ENCODE measurements at regions of chr12 and their contacts with region 1.

Region 1: DNA sequence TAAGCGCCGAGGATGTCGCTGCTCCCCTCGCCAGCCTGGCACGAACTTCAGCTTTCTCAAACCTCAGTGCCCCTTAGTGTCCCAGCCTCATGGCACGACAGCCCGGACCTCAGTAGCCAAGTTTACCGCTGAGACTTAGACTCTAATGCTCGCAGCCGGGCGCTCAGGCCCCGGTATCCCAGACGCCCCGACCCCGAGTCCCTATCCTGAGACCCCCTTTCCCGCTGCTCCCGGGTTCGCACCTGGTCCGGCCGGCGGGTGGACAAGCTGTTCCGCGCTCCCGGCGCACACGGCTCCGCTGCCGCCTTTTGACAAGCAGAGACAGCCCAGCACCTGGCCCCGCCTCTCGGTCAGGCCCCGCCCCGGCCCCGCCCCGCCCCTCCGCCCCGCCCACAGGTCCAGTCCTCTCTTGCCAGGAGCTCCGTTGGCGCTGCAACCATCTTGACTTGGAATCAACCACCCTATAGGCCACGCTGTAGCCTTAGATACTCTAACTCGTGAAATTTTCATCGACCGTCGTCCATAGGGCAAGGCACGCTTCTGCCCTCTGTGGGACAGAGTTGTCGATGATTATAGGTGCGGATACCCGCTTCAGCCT is at the start of gene VDR:
- DNase-seq: peak; percentile 53 to 86 (median 67)
- ATAC-seq: peak; percentile 62 to 87 (median 80)
- H3K4me3 ChIP-seq: peak within 1 kb of the TSS; percentile 29 to 74 (median 54)
- H3K27ac ChIP-seq: peak within 1 kb of the TSS in 2 of 12 donors; percentile 32 to 79
- H3K4me1 ChIP-seq: peaks cover 0 to 58% (median 14%) of the 10 kb centered on the region in 12 donors
- H3K27me3 ChIP-seq: peaks cover 0 to 29% (median 2%) of the 10 kb centered on the region in 9 donors
- CTCF ChIP-seq: peak in 2 of 12 donors; percentile 11 to 37
- POLR2A ChIP-seq: peak in 1 of 2 donors; percentile 33
- total RNA-seq, gene VDR: 0.15 to 4.3 (median 0.63) TPM

Region 2: GRCh38 chr12:47949441-47950308 is 44.9 kb after region 1 on chr12:
- intact Hi-C with region 1: loop called in 8 of 10 experiments (anchors 2 to 5 kb)
- DNase-seq: peak; percentile 68 to 88 (median 80)
- ATAC-seq: peak; percentile 70 to 92 (median 89)
- H3K4me3 ChIP-seq: no peak overlapping the region
- H3K27ac ChIP-seq: no peak overlapping the region
- H3K4me1 ChIP-seq: peaks cover 0 to 17% (median 2%) of the 10 kb centered on the region in 12 donors
- H3K27me3 ChIP-seq: no peaks in the 10 kb centered on the region
- CTCF ChIP-seq: peak; percentile 76 to 91 (median 82)
- POLR2A ChIP-seq: no peak

Region 3: DNA sequence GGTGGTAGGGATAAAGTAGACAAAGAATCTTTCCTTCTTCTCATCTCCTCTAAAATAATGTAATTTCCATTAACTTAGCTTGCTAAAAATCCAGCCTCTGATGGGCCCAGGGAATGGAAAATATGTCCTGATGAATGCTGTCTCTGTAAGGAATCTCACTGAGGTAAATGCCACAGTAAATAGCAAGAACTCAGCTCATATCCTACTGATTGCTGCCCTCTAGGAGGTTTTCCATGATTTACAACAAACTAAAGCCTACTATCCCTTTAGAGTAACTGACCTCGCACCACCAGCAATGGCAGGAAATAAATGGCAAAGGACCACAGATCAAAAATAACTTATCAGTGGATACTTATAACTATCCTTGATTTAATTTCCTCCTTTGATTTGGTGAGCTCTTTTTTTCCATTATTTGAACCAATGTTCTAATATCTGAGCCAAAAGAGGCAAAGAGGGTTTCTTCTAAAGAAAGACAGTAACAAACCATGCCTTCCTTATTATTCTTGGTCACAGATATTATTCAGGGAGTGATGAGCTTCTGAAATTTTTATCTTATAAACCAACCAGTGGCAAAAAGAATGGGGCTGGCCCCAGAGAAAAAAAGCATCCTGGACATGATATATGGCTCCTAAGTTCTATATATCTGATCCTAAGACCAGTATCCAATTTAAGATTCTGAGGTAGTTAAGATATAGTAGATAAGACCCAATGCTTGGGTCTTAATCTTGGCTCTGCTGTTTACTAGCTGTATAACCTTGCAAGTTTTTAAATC is 157.3 kb after region 1 on chr12:
- intact Hi-C with region 1: loop called in 1 of 10 experiments (anchors 10 kb)
- DNase-seq: no peak
- ATAC-seq: no peak
- H3K4me3 ChIP-seq: no peak overlapping the region
- H3K27ac ChIP-seq: no peak overlapping the region
- H3K4me1 ChIP-seq: no peaks in the 10 kb centered on the region
- H3K27me3 ChIP-seq: no peaks in the 10 kb centered on the region
- CTCF ChIP-seq: peak in 1 of 12 donors; percentile 10
- POLR2A ChIP-seq: no peak

Region 4: DNA sequence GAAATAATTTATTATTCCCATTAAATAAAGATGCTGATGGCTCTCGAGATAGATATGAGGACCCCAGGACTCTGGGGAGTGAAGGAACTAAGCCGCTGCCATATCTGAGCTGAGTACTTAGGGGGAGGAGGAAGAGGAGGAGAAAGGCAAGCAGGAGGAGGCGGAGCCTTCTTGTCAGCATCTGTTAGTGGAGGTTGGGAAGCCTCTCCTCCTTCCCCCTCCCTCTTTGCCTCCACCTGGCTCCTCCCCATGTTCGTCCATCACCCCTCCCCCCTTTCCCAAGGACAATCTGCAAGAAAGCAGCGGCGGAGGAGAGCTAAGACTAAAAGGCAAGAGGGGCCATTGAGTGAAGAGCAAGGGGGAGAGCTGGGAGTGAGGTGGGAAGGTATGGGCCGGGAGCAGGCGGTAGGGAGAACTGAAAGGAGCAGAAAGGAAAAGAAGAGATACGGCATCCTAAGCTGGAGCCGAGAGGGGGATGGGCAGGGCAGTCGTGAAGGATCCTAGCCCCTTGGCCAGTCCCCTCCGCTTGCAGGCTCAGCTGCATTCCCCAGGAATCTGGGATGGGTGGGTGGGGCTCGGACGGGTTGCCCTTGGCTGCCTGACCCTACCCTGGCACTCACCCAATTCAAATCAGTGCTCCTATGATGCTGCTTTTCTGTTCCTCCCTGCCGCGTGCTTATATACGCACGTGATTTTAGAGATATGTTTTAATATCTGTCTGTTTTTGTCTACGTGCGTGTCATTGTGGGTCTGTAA is 214.4 kb after region 1 on chr12 and contains the start of gene PFKM:
- intact Hi-C with region 1: no loop called
- DNase-seq: peak; percentile 80 to 92 (median 88)
- ATAC-seq: peak; percentile 95 to 98 (median 97)
- H3K4me3 ChIP-seq: peak within 1 kb of the TSS; percentile 32 to 97 (median 68)
- H3K27ac ChIP-seq: peak within 1 kb of the TSS; percentile 20 to 95 (median 82)
- H3K4me1 ChIP-seq: peaks cover 0 to 31% (median 10%) of the 10 kb centered on the region in 12 donors
- H3K27me3 ChIP-seq: no peaks in the 10 kb centered on the region
- CTCF ChIP-seq: no peak
- POLR2A ChIP-seq: peak in 1 of 2 donors; percentile 56
- total RNA-seq, gene PFKM: 230 to 901 (median 521) TPM